Colonic mucosa (tissue), 4 donors: ENCODE measurements at regions of chr1 and their contacts with region 1.

Region 1: GRCh38 chr1:207077470-207078377 is 10.9 kb upstream of the C4BPB start:
- DNase-seq: peak; percentile 89
- H3K4me3 ChIP-seq: no peak overlapping the region
- H3K27ac ChIP-seq: no peak overlapping the region
- H3K4me1 ChIP-seq: no peaks in the 10 kb centered on the region
- H3K27me3 ChIP-seq: no peaks in the 10 kb centered on the region
- CTCF ChIP-seq: peak; percentile 94

Region 2: DNA sequence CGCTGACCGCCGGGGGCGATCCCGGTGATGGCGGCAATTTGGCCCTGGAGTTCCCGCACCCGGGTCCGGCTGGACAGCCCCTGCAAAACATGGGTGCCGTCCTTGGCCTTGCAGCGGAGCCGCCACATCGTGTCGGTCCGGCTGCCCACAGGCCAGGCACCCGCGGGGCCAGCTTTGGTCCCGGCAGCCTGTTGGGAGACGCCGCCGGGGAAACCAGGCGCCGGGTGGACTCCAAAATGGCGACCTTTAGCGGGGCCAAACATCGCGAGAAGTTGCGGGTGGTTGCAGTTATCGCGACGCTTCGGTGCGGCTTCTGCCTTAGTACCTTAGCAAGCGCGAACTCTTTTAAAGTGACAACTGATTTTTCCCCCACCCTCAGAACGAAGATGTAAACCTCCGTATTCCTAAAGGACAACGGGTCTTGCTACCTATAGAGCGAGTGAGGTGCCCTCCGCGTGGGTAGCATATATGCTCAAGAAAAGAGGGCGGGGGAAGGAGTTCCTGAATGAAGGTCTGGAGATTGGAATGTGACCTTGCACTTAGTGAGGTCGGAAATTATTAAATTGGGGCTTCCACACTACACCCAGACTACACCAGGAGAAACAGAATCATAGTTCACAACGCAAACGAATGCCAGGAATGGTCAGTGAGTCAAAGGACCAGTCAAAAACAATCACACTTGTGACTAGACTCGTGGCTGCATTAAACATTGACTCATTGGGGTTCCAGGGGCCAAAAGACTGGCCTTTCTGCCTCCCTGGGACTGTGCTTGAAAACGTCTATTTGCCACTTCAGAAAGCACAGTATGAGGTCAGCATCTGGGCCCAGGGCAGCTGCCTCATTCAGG is 26.7 kb before region 1 on chr1 and contains the start of gene YOD1:
- intact Hi-C with region 1: loop called (anchors 1 kb)
- DNase-seq: peak; percentile 93
- H3K4me3 ChIP-seq: peak within 1 kb of the TSS; percentile 94
- H3K27ac ChIP-seq: peak within 1 kb of the TSS; percentile 91
- H3K4me1 ChIP-seq: peaks cover 22% of the 10 kb centered on the region
- H3K27me3 ChIP-seq: no peaks in the 10 kb centered on the region
- CTCF ChIP-seq: no peak
- total RNA-seq, gene YOD1: 5.7 to 8.0 TPM

Region 3: GRCh38 chr1:207145401-207146058 is 67.8 kb after region 1 on chr1:
- intact Hi-C with region 1: no loop called
- DNase-seq: no peak
- H3K4me3 ChIP-seq: no peak overlapping the region
- H3K27ac ChIP-seq: no peak overlapping the region
- H3K4me1 ChIP-seq: no peaks in the 10 kb centered on the region
- H3K27me3 ChIP-seq: no peaks in the 10 kb centered on the region
- CTCF ChIP-seq: no peak